ENCODE measurements at regions of chr15 and their contacts with region 1.

Region 1: DNA sequence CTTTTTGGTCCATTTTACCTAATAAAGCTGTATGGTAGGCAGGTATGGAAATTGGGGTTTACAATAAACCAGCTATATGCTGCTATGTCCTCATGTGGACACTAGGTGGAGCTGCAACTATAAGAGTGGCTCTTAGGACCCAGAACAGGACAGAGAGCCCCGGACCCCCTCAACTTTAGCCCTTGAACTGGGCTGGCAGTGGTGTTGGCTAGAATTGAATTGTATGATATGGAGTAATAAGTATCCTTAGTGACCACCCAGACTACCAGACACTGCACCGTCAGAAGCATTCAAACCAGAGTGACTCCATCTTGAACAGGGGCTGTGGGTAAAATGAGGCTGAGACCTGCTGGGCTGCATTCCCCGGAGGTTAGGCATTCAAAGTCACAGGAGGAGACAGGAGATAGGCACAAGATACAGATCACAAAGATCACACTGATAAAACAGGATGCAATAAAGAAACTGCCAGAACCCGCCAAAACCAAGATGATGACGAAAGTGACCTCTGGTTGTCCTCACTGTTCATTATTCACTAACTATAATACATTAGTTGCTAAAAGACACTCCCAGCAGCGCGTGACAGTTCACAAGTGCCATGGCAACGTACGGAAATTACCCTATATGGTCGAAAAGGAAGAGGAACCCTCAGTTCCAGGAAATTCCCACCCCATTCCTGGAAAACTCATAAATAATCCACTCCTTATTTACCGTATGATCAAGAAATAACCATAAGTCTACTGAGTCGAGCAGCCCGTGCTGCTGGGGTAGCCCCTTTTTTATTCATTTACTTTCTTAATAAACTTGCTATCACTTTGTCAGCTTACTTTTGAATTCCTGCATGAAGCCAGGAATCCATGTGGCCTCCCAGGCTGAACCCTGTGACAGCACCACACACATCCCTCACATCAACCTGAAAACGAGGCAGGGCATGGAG is 68.7 kb upstream of the BLM start:
- DNase-seq: peak in 8 of 9 donors; percentile 48 to 69 (median 58)
- ATAC-seq: peak; percentile 83
- H3K4me3 ChIP-seq: no peak overlapping the region
- H3K4me3 Mint-ChIP-seq: peak overlapping the region; percentile 29 to 83 (median 68)
- H3K27ac ChIP-seq: no peak overlapping the region
- H3K27ac Mint-ChIP-seq: peak overlapping the region in 6 of 9 donors; percentile 31 to 95 (median 47)
- H3K4me1 ChIP-seq: peaks cover 9 to 15% of the 10 kb centered on the region in 2 donors
- H3K4me1 Mint-ChIP-seq: peaks cover 27 to 54% (median 37%) of the 10 kb centered on the region in 7 donors
- H3K27me3 ChIP-seq: no peaks in the 10 kb centered on the region
- H3K27me3 Mint-ChIP-seq: peaks cover 0 to 4% (median 0%) of the 10 kb centered on the region in 5 donors

Region 2: DNA sequence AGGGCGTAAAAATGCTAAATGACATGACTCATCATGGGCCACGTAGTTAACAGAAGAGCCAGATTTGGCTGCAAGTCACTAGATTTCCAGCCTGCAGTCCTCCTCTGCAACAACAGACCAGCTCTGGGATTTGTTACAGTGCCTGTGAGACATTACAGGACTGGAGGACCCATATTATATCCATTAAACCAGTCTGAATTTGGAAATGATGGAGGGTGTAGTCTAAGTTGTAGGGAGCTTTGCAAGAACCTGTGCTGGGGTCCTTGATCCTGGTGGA is 285.5 kb before region 1 on chr15:
- CTCF ChIA-PET with region 1: no interaction called
- POLR2A ChIA-PET with region 1: no interaction called
- intact Hi-C with region 1: loop called in 1 of 2 experiments (anchors 10 kb)
- DNase-seq: no peak
- ATAC-seq: no peak
- H3K4me3 ChIP-seq: no peak overlapping the region
- H3K4me3 Mint-ChIP-seq: peak overlapping the region in 1 of 10 donors; percentile 44
- H3K27ac ChIP-seq: no peak overlapping the region
- H3K27ac Mint-ChIP-seq: no peak overlapping the region
- H3K4me1 ChIP-seq: peaks cover 6 to 13% of the 10 kb centered on the region in 2 donors
- H3K4me1 Mint-ChIP-seq: peaks cover 11 to 35% (median 34%) of the 10 kb centered on the region in 7 donors
- H3K27me3 ChIP-seq: no peaks in the 10 kb centered on the region
- H3K27me3 Mint-ChIP-seq: no peaks in the 10 kb centered on the region

Region 3: DNA sequence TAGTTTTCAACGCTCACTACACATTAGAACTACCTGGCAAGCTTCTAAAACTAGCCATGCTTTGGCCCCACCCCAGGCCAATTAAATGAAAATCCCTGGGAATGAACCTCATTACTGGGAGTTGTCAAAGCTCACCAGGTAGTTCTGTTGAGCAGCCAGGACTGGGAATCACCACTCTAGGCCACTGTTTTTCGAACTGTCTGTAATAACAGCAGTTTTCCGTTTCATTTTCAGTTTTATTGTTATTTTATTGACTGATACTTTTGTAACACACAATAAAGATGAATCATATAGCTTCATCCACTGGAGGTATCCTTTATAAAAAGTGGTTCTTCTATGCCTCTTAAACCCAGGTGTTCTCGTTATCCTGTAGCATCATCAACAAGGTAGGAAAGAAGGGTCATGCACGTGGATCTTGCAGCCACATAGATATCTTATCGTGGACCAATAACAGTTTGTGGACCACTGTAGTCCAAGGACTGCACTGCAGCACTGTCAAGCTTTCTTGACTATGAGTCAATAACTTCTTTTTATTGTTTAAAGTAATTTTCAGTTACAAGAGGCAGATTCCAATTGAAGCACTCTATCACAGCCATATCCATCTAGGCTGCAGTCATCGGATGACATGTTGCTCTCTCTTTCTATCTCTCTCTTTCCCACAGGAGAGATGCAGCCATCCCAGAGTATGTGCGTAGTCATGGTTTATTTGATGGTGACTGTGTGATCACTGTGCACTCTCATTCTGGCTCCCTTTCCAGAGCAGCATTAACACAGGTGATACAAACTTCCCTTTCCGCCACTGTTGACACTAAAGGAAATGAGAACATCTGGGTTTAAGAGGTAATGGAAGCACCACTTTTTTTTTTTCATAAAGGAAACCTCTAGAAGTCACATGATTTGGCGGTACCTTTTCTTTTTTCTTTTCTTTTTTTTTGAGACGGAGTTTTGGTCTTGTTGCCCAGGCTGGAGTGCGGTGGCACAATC is 29.7 kb after region 1 on chr15:
- CTCF ChIA-PET with region 1: interaction called, 3 read pairs
- POLR2A ChIA-PET with region 1: no interaction called
- intact Hi-C with region 1: loop called in 1 of 2 experiments (anchors 1 kb)
- DNase-seq: peak in 7 of 9 donors; percentile 57 to 79 (median 70)
- ATAC-seq: peak; percentile 84
- H3K4me3 ChIP-seq: peak overlapping the region; percentile 18
- H3K4me3 Mint-ChIP-seq: peak overlapping the region; percentile 51 to 87 (median 71)
- H3K27ac ChIP-seq: no peak overlapping the region
- H3K27ac Mint-ChIP-seq: peak overlapping the region; percentile 21 to 96 (median 92)
- H3K4me1 ChIP-seq: peaks cover 5 to 18% of the 10 kb centered on the region in 2 donors
- H3K4me1 Mint-ChIP-seq: peaks cover 12 to 58% (median 26%) of the 10 kb centered on the region in 7 donors
- H3K27me3 ChIP-seq: no peaks in the 10 kb centered on the region
- H3K27me3 Mint-ChIP-seq: peaks cover 0 to 4% (median 0%) of the 10 kb centered on the region in 5 donors

Region 4: GRCh38 chr15:90691982-90692773 is 43.8 kb after region 1 on chr15:
- CTCF ChIA-PET with region 1: interaction called, 11 read pairs
- POLR2A ChIA-PET with region 1: no interaction called
- intact Hi-C with region 1: loop called (anchors 1 kb)
- DNase-seq: no peak
- ATAC-seq: no peak
- H3K4me3 ChIP-seq: no peak overlapping the region
- H3K4me3 Mint-ChIP-seq: peak overlapping the region in 1 of 10 donors; percentile 33
- H3K27ac ChIP-seq: no peak overlapping the region
- H3K27ac Mint-ChIP-seq: peak overlapping the region in 1 of 9 donors; percentile 40
- H3K4me1 ChIP-seq: no peaks in the 10 kb centered on the region
- H3K4me1 Mint-ChIP-seq: peaks cover 1 to 52% (median 10%) of the 10 kb centered on the region in 7 donors
- H3K27me3 ChIP-seq: no peaks in the 10 kb centered on the region
- H3K27me3 Mint-ChIP-seq: no peaks in the 10 kb centered on the region

Region 5: DNA sequence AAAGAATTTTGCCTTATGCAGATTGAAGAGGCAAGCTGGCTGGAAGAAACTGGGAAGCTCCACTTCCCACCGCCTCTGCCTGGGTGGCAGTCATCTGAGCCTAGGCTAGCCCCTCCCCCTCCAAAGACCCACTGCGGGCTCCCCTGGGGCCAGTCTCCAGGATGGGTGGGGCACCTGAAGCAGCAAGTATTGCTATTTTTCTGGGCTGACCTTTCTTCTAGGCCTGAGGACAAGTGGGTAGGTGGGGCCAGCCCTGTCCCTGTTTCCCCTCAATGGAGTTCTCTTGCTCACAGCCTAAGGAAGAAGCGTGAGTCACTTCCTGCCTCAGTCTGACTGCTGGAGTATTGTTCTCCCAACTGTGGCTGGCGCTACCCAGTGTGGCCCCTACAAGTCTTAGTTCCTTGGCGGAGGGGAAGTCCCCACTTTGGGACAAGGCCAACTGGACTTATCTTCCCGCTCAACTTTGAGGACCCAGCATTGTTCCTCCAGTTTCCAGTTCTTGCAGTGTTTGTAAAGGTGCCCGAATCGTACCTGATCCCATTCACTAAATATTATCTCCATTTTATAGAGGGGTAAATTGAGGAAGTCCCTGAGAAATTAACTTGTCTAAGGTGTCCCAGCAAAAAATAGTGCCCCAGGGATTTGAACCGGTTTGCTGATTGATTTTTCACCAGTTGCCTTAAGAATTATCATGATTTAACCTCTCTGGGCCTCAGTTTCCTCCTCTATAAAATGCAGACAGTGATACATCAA is 221.4 kb after region 1 on chr15:
- CTCF ChIA-PET with region 1: no interaction called
- POLR2A ChIA-PET with region 1: no interaction called
- intact Hi-C with region 1: loop called (anchors 5 kb)
- DNase-seq: peak in 1 of 9 donors; percentile 67
- ATAC-seq: peak; percentile 73
- H3K4me3 ChIP-seq: peak overlapping the region; percentile 53
- H3K4me3 Mint-ChIP-seq: peak overlapping the region; percentile 82 to 93 (median 90)
- H3K27ac ChIP-seq: peak overlapping the region; percentile 73
- H3K27ac Mint-ChIP-seq: peak overlapping the region; percentile 82 to 97 (median 92)
- H3K4me1 ChIP-seq: peaks cover 27% of the 10 kb centered on the region in 2 donors
- H3K4me1 Mint-ChIP-seq: peaks cover 22 to 66% (median 45%) of the 10 kb centered on the region in 7 donors
- H3K27me3 ChIP-seq: no peaks in the 10 kb centered on the region
- H3K27me3 Mint-ChIP-seq: no peaks in the 10 kb centered on the region